ENCODE measurements at regions of chr1 and their contacts with region 1.

Region 1: DNA sequence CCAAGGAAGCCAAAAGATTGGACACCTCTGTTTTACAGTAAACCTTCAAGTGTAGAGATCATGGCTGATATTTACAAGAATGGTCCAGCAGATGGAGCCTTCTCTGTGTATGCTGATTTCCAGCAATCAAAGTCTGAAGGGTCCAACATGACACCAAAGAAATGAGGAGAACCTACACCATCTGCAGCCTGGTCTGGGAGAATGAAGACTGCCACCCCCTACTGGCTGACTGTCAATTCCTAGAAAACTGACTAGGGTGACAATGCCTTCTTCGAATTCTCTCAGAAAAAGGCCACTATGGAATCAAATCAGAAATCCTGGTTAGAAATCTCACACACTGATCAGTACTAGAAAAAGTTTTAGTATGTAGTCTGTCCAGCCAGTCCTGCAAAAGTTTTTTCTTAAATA is 83.3 kb downstream of the CDC42BPA start:
- DNase-seq: no peak
- ATAC-seq: peak; percentile 69

Region 2: DNA sequence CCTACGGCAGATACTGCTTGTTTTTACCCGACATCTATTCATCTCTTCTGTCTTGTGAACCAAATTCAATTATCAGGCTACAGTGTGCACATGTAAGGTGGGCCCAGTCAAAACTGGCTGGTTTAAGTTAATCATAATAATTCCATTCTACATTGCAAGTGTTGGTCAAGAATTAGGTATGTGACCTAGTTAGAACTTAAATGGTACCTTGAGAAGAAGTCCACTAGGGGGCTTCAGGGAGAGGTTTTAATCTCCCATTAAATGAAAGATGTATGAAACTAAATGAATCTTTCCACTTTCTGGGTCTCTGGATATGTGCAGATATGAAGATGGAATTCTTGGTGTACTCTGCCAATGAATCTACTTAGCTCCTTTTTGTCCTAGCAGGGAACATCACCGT is 103.8 kb before region 1 on chr1:
- intact Hi-C with region 1: loop called (anchors 10 kb)
- DNase-seq: no peak
- ATAC-seq: peak; percentile 29

Measured in Right ventricle myocardium superior (tissue), 1 donor.